HepG2 (cell line): ENCODE measurements at regions of chr22 and their contacts with region 1.

Region 1: GRCh38 chr22:23385291-23386244 is 194.5 kb downstream of the IGLL1 start:
- DNase-seq: peak; percentile 59
- ATAC-seq: peak; percentile 85
- H3K4me3 ChIP-seq: no peak overlapping the region
- H3K27ac ChIP-seq: no peak overlapping the region
- H3K4me1 ChIP-seq: peaks cover 27% of the 10 kb centered on the region
- H3K27me3 ChIP-seq: peaks cover 8 to 29% of the 10 kb centered on the region in 2 experiments; a peak in 4 of 5 replicates
- CTCF ChIP-seq: peak; percentile 99
- EP300 ChIP-seq: no peak
- POLR2A ChIP-seq: no peak
- RAD21 ChIP-seq: peak; percentile 97

Region 2: DNA sequence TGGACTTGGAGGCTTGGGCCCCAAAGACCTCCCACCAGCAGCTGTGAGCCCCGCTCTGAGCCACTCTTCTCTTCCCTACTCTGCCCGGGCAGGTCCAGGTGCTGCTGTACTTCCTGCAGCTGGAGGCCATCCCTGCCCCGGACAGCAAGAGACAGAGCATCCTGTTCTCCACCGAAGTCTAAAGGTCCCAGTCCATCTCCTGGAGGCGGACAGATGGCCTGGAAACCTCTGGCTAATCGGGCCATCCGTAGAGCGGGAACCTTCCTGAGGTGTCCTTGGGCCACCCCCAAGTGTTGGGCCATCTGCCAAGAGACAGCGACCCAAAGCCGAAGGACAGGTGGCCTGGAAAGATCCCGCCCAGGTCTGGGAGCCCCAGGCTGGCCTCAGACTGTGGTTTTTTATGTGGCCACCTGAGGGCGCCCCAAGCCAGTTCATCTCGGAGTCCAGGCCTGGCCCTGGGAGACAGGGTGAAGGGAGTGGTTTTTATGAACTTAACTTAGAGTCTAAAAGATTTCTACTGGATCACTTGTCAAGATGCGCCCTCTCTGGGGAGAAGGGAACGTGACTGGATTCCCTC is 70.1 kb before region 1 on chr22:
- CTCF ChIA-PET with region 1: interaction called, 22 read pairs
- POLR2A ChIA-PET with region 1: no interaction called
- in situ Hi-C with region 1: loop called (anchors 5 kb)
- intact Hi-C with region 1: no loop called
- DNase-seq: peak; percentile 39
- ATAC-seq: peak; percentile 66
- H3K4me3 ChIP-seq: no peak overlapping the region
- H3K27ac ChIP-seq: no peak overlapping the region
- H3K4me1 ChIP-seq: no peaks in the 10 kb centered on the region
- H3K27me3 ChIP-seq: no peaks in the 10 kb centered on the region
- CTCF ChIP-seq: peak; percentile 85
- EP300 ChIP-seq: no peak
- POLR2A ChIP-seq: no peak
- RAD21 ChIP-seq: peak; percentile 74

Region 3: DNA sequence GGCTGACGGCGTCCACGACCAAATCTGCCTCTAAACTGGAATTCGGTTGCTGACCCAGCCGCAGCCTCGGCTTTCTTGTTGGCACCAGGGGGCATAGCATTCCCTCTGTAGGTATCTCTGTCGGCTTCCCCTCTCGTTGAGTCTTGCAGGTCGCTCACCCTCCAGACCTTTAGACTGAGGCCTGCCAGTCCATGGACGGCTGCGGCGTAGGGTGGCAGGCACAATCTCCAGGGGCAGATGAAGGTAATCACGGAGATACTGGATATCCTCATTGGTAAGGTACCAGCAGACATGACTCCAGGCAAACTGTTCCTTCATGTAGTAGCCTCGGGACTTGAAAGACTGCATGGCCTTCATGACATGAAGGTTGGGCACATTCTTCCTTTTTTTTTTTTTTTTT is 63.0 kb before region 1 on chr22:
- CTCF ChIA-PET with region 1: interaction called, 14 read pairs
- POLR2A ChIA-PET with region 1: no interaction called
- in situ Hi-C with region 1: loop called (anchors 5 kb)
- intact Hi-C with region 1: loop called (anchors 2 kb)
- DNase-seq: peak; percentile 43
- ATAC-seq: peak; percentile 57; the same call in 2 of the 3 replicates
- H3K4me3 ChIP-seq: no peak overlapping the region
- H3K27ac ChIP-seq: no peak overlapping the region
- H3K4me1 ChIP-seq: peaks cover 6% of the 10 kb centered on the region; the same call in 1 of the 2 replicates
- H3K27me3 ChIP-seq: no peaks in the 10 kb centered on the region
- CTCF ChIP-seq: peak; percentile 55
- EP300 ChIP-seq: no peak
- POLR2A ChIP-seq: no peak
- RAD21 ChIP-seq: no peak

Region 4: GRCh38 chr22:23368656-23369417 is 16.7 kb before region 1 on chr22:
- CTCF ChIA-PET with region 1: no interaction called
- POLR2A ChIA-PET with region 1: no interaction called
- in situ Hi-C with region 1: no loop called
- intact Hi-C with region 1: no loop called
- DNase-seq: no peak
- ATAC-seq: no peak
- H3K4me3 ChIP-seq: no peak overlapping the region
- H3K27ac ChIP-seq: no peak overlapping the region
- H3K4me1 ChIP-seq: no peaks in the 10 kb centered on the region
- H3K27me3 ChIP-seq: peaks cover 0 to 7% of the 10 kb centered on the region in 2 experiments; a peak in 1 of 5 replicates
- CTCF ChIP-seq: no peak
- EP300 ChIP-seq: no peak
- POLR2A ChIP-seq: no peak
- RAD21 ChIP-seq: no peak